ENCODE measurements at regions of chr4 and their contacts with region 1.

Region 1: GRCh38 chr4:165343353-165344191 is 16.1 kb downstream of the MSMO1 start:
- DNase-seq: peak; percentile 37
- ATAC-seq: no peak
- H3K4me3 Mint-ChIP-seq: no peak overlapping the region
- H3K27ac Mint-ChIP-seq: no peak overlapping the region
- H3K4me1 Mint-ChIP-seq: no peaks in the 10 kb centered on the region
- H3K27me3 Mint-ChIP-seq: no peaks in the 10 kb centered on the region

Region 2: DNA sequence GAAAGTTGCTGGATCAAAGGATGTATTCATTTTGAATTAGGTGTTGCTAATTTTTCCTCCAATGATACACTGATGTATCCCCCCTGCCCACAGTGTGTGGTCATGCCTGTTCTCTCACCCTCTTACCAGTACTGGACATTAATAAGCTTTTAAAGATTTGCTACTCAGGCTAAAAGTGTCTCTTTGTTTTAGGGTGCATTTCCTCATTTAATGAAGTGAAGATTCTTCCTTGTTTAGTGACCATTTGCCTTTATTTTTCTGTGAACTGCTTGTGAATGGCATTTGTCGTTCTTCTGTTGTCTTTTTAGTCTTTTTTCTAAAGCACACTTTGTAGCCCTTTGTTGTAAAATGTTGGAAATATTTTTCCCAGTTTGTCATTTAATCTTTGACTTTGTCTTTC is 11.1 kb before region 1 on chr4:
- CTCF ChIA-PET with region 1: interaction called, 15 read pairs
- POLR2A ChIA-PET with region 1: interaction called, 3 read pairs
- intact Hi-C with region 1: no loop called
- DNase-seq: no peak
- ATAC-seq: no peak
- H3K4me3 Mint-ChIP-seq: peak overlapping the region; percentile 4
- H3K27ac Mint-ChIP-seq: peak overlapping the region; percentile 18
- H3K4me1 Mint-ChIP-seq: peaks cover 41% of the 10 kb centered on the region
- H3K27me3 Mint-ChIP-seq: no peaks in the 10 kb centered on the region

Measured in activated CD4-positive, alpha-beta T cell treated with anti-CD3 and anti-CD28 coated beads for 36 hours (primary cell).